Right cardiac atrium (tissue), 5 donors: ENCODE measurements at regions of chr4 and their contacts with region 1.

Region 1: GRCh38 chr4:2418650-2419571 is at the start of gene CFAP99:
- DNase-seq: peak; percentile 98 to 99 (median 99)
- ATAC-seq: peak; percentile 97 to 98
- H3K4me3 ChIP-seq: peak within 1 kb of the TSS; percentile 86
- H3K27ac ChIP-seq: no peak within 1 kb of the TSS
- H3K4me1 ChIP-seq: peaks cover 2% of the 10 kb centered on the region
- H3K27me3 ChIP-seq: no peaks in the 10 kb centered on the region
- total RNA-seq, gene CFAP99: not detected

Region 2: GRCh38 chr4:2255501-2256155 is 163.3 kb before region 1 on chr4:
- intact Hi-C with region 1: loop called in 2 of 4 experiments (anchors 10 kb)
- DNase-seq: peak; percentile 54 to 84 (median 83)
- ATAC-seq: peak; percentile 15 to 33
- H3K4me3 ChIP-seq: no peak overlapping the region
- H3K27ac ChIP-seq: peak overlapping the region; percentile 66
- H3K4me1 ChIP-seq: peaks cover 28% of the 10 kb centered on the region
- H3K27me3 ChIP-seq: no peaks in the 10 kb centered on the region

Region 3: DNA sequence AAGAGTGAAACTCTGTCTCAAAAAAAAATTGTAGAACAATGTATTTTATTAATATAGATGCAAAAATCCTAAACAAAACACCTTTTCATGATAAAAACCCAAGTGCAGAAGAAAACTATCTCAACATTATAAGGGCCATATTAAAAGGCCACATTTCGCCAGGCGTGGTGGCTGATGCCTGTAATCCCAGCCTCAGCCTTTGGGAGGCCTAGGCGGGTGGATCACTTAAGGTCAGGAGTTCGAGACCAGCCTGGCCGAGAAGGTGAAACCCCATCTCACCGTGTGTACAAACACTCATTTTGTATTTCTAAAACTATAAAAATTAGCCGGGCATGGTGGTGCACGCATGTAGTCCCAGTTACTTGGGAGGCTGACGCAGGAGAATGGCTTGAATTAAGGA is 107.6 kb after region 1 on chr4:
- intact Hi-C with region 1: no loop called
- DNase-seq: peak in 1 of 3 donors; percentile 11
- ATAC-seq: no peak
- H3K4me3 ChIP-seq: no peak overlapping the region
- H3K27ac ChIP-seq: no peak overlapping the region
- H3K4me1 ChIP-seq: no peaks in the 10 kb centered on the region
- H3K27me3 ChIP-seq: no peaks in the 10 kb centered on the region